PC-9 (cell line): ENCODE measurements at regions of chr12 and their contacts with region 1.

Region 1: DNA sequence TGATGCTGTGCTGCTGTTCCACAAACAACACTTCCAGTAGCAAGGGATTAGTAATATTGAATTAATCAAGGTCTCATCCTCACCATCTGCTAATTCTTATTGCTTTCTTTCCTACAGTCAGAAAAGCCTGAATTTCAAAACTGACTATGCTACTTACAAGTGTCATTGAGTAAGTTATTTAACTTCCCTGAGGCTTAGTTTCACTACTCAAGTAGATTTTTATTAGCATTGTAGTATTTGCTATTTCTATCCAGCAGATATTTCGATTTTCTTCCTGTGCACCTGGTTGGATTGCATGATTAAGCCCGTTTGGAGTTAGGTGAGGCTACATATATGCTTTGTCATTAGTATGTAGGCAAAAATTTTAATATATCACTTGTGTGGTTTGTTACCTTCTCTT is 591.5 kb downstream of the TRHDE start:
- DNase-seq: no peak
- H3K4me3 ChIP-seq: no peak overlapping the region
- H3K27ac ChIP-seq: no peak overlapping the region
- H3K4me1 ChIP-seq: no peaks in the 10 kb centered on the region
- H3K27me3 ChIP-seq: no peaks in the 10 kb centered on the region
- CTCF ChIP-seq: no peak

Region 2: GRCh38 chr12:72828662-72829324 is 34.9 kb before region 1 on chr12:
- CTCF ChIA-PET with region 1: no interaction called
- POLR2A ChIA-PET with region 1: no interaction called
- intact Hi-C with region 1: no loop called
- DNase-seq: no peak
- H3K4me3 ChIP-seq: no peak overlapping the region
- H3K27ac ChIP-seq: no peak overlapping the region
- H3K4me1 ChIP-seq: no peaks in the 10 kb centered on the region
- H3K27me3 ChIP-seq: no peaks in the 10 kb centered on the region
- CTCF ChIP-seq: no peak

Region 3: GRCh38 chr12:72839696-72840095 is 24.0 kb before region 1 on chr12:
- CTCF ChIA-PET with region 1: no interaction called
- POLR2A ChIA-PET with region 1: no interaction called
- intact Hi-C with region 1: loop called (anchors 2 kb)
- DNase-seq: no peak
- H3K4me3 ChIP-seq: no peak overlapping the region
- H3K27ac ChIP-seq: no peak overlapping the region
- H3K4me1 ChIP-seq: no peaks in the 10 kb centered on the region
- H3K27me3 ChIP-seq: no peaks in the 10 kb centered on the region
- CTCF ChIP-seq: no peak